AG04449 (cell line): ENCODE measurements at regions of chr18 and their contacts with region 1.

Region 1: GRCh38 chr18:59249205-59249774 is 24.0 kb downstream of the RAX start:
- DNase-seq: no peak
- H3K4me3 ChIP-seq: no peak overlapping the region
- CTCF ChIP-seq: peak; percentile 65

Region 2: GRCh38 chr18:59228351-59228750 is 20.9 kb before region 1 on chr18:
- CTCF ChIA-PET with region 1: interaction called, 19 read pairs
- POLR2A ChIA-PET with region 1: no interaction called
- DNase-seq: peak; percentile 55
- H3K4me3 ChIP-seq: no peak overlapping the region
- CTCF ChIP-seq: no peak

Region 3: DNA sequence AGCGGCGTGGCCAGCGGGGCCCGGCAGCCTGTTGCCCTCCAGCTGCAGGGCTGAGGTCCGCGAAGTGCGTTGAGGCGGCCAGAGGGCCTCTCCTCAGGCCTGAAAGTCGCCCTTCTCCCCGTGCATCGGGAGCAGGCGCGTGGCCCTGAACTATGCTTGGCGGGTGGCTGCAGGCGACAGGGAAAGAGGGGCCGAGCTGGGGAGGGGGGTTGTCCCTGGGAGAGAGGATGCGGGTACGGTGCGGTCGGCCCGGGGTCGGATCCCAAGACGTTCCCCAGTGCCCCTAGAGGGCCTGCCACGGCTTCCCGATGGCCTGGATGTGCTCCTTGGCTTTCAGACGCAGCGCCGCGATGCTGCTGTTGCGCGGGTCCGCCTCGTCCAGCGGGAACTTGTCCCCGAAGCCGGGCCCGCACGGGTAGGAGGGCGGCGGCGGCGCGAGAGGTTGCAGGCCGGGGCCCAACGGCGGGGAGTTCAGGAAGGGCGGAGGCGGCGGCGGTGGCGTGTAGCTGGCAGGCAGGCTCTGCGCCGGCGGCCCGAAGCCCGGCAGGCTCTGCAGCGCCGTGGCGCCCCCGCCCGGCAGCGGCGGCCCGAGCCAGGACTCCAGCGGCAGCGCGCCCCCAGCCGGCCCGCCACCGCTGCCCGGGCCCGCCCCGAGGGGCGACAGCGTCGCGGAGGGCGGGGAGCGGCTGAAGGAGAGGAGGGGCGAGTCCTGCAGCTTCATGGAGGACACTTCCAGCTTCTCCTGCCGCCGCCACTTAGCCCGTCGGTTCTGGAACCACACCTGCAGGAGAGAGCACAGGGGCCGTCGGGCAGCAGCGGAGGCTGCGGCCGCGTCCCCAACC is 19.7 kb after region 1 on chr18:
- CTCF ChIA-PET with region 1: interaction called, 21 read pairs
- POLR2A ChIA-PET with region 1: no interaction called
- DNase-seq: no peak
- H3K4me3 ChIP-seq: no peak overlapping the region
- CTCF ChIP-seq: no peak

Region 4: GRCh38 chr18:59300676-59301285 is 51.5 kb after region 1 on chr18:
- CTCF ChIA-PET with region 1: interaction called, 10 read pairs
- POLR2A ChIA-PET with region 1: no interaction called
- DNase-seq: no peak
- H3K4me3 ChIP-seq: no peak overlapping the region
- CTCF ChIP-seq: no peak